Activated CD4-positive, alpha-beta T cell treated with anti-CD3 and anti-CD28 coated beads, Interleukin-2, amount 10 ng/mL, durations not matched to agents 24 days and 14 days (primary cell): ENCODE measurements at regions of chr6 and their contacts with region 1.

Region 1: DNA sequence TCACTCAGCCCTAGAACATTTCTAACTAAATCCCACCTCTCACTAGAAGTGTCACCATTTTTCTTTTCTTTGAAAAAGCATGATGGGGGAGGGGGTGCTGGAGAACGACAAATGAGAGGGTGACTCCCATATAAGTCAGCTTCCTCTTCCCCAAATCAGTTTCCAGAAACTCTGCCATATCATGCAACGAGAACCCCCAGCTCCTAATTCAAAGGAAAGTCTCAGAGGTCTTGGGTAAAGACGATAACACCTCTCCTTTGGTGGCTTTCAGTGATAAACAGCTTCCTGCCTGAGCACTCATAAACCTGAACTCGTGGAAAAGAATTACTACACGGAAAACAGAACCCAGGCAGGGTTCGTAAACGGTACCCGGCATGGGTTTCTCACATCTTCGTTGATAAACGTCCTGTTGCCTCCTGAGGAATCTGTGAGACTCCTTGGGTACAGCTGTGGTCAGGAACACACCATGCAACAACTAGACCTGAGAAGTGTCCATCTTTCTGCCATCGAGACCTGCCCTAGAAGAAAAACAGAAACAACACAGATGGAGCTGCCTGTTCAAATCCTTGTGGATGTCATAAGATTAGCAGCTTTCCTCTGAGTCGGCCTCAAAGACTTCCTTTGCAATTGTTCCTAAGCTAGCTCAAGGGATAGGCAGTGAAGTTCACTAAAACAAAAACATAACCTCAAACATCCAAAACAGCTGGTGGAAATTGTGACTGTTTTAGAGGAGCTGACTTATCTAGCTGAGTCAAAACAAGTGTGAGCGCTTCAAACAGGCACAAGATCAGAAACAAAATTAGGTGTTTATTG is 185.8 kb upstream of the PRDM1 start:
- DNase-seq: peak; percentile 83
- H3K4me3 Mint-ChIP-seq: peak overlapping the region; percentile 75
- H3K27ac Mint-ChIP-seq: peak overlapping the region; percentile 95
- H3K4me1 Mint-ChIP-seq: peaks cover 26% of the 10 kb centered on the region
- H3K27me3 Mint-ChIP-seq: no peaks in the 10 kb centered on the region

Region 2: DNA sequence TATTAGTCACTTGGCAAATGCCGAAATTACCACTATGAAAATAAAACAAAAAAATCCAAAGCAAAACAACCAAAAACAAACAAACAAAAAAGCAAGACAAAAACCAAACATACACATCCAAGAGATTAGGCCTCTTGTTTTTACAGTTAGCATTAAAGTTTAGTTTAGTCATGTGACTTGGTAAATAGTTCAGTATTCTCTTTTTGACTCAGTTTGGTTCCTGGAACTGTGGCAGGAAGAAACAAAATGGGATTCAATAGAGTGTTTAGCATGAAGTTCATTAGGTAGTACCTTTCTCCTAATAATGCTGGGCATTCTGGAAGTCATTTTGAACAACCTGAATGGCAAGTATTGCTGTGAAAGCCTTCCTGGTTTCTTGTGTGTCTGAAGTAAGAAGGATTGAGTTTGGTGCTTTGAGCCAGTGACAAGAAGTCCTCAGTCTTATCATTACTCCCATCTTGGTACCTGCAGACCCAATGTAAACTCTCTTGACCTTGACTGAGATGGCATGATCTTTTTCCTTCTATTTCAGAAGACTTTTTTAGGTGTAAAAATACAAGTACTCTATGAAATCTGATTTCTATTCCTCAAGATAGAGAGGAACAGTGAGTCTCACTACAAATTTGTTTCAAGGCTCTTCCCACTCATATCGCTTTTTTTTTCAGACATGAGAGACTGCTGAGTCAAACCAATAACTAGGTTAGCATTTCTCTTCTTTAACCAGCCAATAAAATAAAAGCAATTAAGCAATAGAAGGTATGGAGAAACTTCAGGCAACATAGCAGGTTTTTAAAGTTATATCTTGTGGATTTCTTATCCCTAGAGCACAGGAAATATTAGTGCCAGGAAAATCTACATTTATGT is 273.8 kb before region 1 on chr6:
- intact Hi-C with region 1: loop called (anchors 1 kb)
- DNase-seq: no peak
- H3K4me3 Mint-ChIP-seq: peak overlapping the region; percentile 60
- H3K27ac Mint-ChIP-seq: peak overlapping the region; percentile 92
- H3K4me1 Mint-ChIP-seq: peaks cover 40% of the 10 kb centered on the region
- H3K27me3 Mint-ChIP-seq: peaks cover 9% of the 10 kb centered on the region

Region 3: GRCh38 chr6:105651969-105652368 is 248.4 kb before region 1 on chr6:
- intact Hi-C with region 1: no loop called
- DNase-seq: no peak
- H3K4me3 Mint-ChIP-seq: no peak overlapping the region
- H3K27ac Mint-ChIP-seq: no peak overlapping the region
- H3K4me1 Mint-ChIP-seq: peaks cover 41% of the 10 kb centered on the region
- H3K27me3 Mint-ChIP-seq: peaks cover 2% of the 10 kb centered on the region

Region 4: GRCh38 chr6:105793130-105793529 is 107.2 kb before region 1 on chr6:
- intact Hi-C with region 1: loop called (anchors 5 kb)
- DNase-seq: peak; percentile 72
- H3K4me3 Mint-ChIP-seq: peak overlapping the region; percentile 54
- H3K27ac Mint-ChIP-seq: peak overlapping the region; percentile 76
- H3K4me1 Mint-ChIP-seq: peaks cover 74% of the 10 kb centered on the region
- H3K27me3 Mint-ChIP-seq: no peaks in the 10 kb centered on the region

Region 5: DNA sequence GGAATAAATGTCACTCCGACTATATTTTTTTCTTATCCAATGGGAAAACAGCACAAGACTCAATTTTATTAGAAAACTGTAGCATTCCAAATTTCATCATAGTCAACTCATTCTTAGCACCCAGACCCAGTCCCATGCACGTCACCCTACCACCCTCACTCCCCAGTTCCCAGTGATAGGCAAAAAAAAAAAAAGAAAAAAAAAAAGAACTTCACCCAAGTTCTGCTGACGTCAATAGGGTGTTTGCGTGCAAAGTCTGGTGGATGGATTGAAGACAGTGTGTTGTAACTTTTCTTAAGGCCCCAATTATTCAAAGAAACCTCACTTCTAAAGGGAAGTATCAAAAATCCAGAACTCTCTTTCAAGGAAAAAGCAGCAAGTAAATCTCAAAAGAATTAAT is 28.1 kb before region 1 on chr6:
- intact Hi-C with region 1: loop called (anchors 1 kb)
- DNase-seq: no peak
- H3K4me3 Mint-ChIP-seq: no peak overlapping the region
- H3K27ac Mint-ChIP-seq: no peak overlapping the region
- H3K4me1 Mint-ChIP-seq: peaks cover 12% of the 10 kb centered on the region
- H3K27me3 Mint-ChIP-seq: peaks cover 6% of the 10 kb centered on the region

Region 6: GRCh38 chr6:105886066-105886813 is 14.1 kb before region 1 on chr6:
- intact Hi-C with region 1: no loop called
- DNase-seq: peak; percentile 25
- H3K4me3 Mint-ChIP-seq: no peak overlapping the region
- H3K27ac Mint-ChIP-seq: no peak overlapping the region
- H3K4me1 Mint-ChIP-seq: peaks cover 42% of the 10 kb centered on the region
- H3K27me3 Mint-ChIP-seq: peaks cover 2% of the 10 kb centered on the region

Region 7: GRCh38 chr6:105981002-105981887 is 80.9 kb after region 1 on chr6:
- intact Hi-C with region 1: loop called (anchors 1 kb)
- DNase-seq: peak; percentile 86
- H3K4me3 Mint-ChIP-seq: peak overlapping the region; percentile 78
- H3K27ac Mint-ChIP-seq: peak overlapping the region; percentile 84
- H3K4me1 Mint-ChIP-seq: peaks cover 54% of the 10 kb centered on the region
- H3K27me3 Mint-ChIP-seq: peaks cover 6% of the 10 kb centered on the region

Region 8: GRCh38 chr6:106223300-106223930 is 323.1 kb after region 1 on chr6:
- intact Hi-C with region 1: loop called (anchors 10 kb)
- DNase-seq: peak; percentile 91
- H3K4me3 Mint-ChIP-seq: no peak overlapping the region
- H3K27ac Mint-ChIP-seq: no peak overlapping the region
- H3K4me1 Mint-ChIP-seq: peaks cover 32% of the 10 kb centered on the region
- H3K27me3 Mint-ChIP-seq: no peaks in the 10 kb centered on the region